ENCODE measurements at regions of chr20 and their contacts with region 1.

Region 1: DNA sequence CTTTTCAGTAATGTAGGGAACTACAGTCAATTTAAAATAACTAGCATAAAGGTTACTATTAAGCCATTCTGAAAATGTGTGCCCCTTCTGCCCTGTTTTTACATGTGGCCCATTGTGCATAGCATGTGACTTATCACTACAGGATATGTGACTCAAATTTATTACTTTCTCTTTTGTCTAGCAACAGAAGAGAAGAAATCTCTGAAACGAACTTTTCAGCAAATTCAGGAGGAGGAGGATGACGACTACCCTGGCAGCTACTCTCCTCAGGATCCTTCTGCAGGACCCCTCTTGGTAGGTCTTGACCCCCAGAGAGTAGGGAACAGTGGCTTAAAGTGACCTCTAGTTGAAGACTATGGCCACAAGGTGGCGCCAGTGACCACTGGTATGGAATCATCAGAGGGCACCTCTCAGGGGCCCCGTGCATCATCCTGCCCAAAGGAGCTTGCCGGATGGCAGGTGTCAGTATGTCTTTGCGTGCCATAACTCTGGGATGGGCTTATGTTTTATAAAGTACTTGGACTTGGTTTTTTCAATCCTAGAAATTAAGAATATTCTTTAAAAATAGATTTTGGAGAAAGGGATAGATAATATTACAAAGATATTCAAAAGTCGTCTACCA is 23.9 kb downstream of the RPRD1B start:
- DNase-seq: peak; percentile 67
- ATAC-seq: peak; percentile 94
- H3K4me3 ChIP-seq: no peak overlapping the region
- H3K27ac ChIP-seq: no peak overlapping the region
- H3K4me1 ChIP-seq: peaks cover 6% of the 10 kb centered on the region
- H3K27me3 ChIP-seq: no peaks in the 10 kb centered on the region
- CTCF ChIP-seq: peak; percentile 80
- POLR2A ChIP-seq: no peak
- RAD21 ChIP-seq: peak; percentile 90

Region 2: GRCh38 chr20:37564388-37565133 is 492.9 kb before region 1 on chr20:
- CTCF ChIA-PET with region 1: no interaction called
- POLR2A ChIA-PET with region 1: no interaction called
- dilution Hi-C with region 1: no loop called
- in situ Hi-C with region 1: loop called (anchors 10 kb)
- intact Hi-C with region 1: loop called (anchors 2 kb)
- DNase-seq: no peak
- ATAC-seq: peak; percentile 96
- H3K4me3 ChIP-seq: no peak overlapping the region
- H3K27ac ChIP-seq: no peak overlapping the region
- H3K4me1 ChIP-seq: no peaks in the 10 kb centered on the region; the same call in 1 of the 2 replicates
- H3K27me3 ChIP-seq: peaks cover 53% of the 10 kb centered on the region
- CTCF ChIP-seq: peak; percentile 95
- POLR2A ChIP-seq: no peak
- RAD21 ChIP-seq: peak; percentile 95

Region 3: DNA sequence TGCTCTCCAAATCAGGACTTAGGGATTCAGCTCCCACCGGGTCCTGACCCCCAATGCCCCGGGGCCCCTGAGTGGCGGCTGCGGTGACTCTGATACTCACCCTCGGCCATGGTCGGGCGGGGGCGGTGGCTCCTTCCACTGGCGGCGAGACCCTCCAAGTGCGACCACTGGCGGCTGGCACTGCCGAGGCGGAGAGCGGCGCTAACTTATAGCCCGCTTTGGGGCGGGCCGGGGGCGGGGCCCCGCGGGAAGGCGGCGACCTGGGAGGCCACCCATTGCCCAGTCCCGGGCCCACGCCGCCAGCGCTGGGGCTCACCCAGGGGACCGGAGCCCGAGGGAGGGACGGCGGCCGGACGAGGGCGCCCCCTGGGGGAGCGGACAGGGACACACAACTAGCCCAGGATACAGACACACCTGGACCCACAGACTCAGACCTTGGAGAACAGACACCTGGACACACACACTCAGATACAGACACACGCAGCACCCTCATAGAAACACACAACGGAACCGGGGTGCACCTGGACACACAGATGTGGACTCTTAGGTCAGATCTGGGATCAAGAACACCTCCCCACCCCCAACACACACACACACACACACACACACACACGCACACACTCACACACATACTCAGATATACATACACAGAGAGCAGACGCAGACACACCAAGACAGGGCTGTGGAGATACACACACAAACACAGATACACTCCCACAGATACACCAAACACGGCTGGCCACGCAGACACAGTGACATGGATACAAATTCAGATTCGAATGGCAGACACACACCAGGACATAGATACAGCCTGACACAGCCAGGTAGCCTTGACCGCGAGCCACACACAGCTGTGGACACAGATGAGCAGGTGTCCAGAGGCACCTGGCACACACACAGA is 107.9 kb after region 1 on chr20 and contains the start of gene TGM2:
- CTCF ChIA-PET with region 1: interaction called, 3 read pairs
- POLR2A ChIA-PET with region 1: no interaction called
- dilution Hi-C with region 1: no loop called
- in situ Hi-C with region 1: no loop called
- intact Hi-C with region 1: loop called (anchors 1 kb)
- DNase-seq: peak; percentile 69
- ATAC-seq: peak; percentile 79
- H3K4me3 ChIP-seq: peak within 1 kb of the TSS; percentile 50
- H3K27ac ChIP-seq: peak within 1 kb of the TSS; percentile 53
- H3K4me1 ChIP-seq: peaks cover 48% of the 10 kb centered on the region
- H3K27me3 ChIP-seq: no peaks in the 10 kb centered on the region
- CTCF ChIP-seq: peak; percentile 81
- POLR2A ChIP-seq: no peak
- RAD21 ChIP-seq: peak; percentile 87
- total RNA-seq, gene TGM2: 237 and 268 TPM in 2 replicates

Region 4: DNA sequence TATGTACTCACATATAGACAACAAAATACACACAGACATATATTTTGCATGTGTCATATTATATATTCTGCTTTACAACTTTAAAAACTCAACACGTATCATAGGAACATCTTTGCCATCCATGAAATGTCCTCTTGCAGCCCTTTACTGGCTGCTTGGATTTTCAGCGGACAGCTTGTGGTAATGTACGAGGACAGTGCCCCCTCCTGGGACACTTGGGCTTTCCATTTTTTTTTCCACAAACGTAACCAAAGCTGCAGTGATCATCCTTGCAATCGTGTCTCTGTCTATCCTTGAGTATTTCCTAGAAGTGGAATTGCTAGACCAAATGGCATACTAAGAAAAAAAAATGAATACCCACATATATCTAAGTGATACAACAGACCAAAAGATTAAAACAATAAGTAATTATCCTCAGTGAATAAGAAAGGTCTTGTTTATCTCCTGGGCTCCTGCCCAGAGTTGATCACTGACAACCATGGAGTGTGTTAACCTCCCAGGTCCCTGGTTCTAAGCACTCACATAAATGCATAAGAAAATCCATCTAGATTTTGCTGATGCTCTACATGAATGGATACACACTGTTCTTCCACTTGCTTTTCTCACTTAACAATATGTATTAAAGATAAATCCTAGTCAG is 264.6 kb after region 1 on chr20:
- CTCF ChIA-PET with region 1: no interaction called
- POLR2A ChIA-PET with region 1: no interaction called
- dilution Hi-C with region 1: no loop called
- in situ Hi-C with region 1: no loop called
- intact Hi-C with region 1: loop called (anchors 2 kb)
- DNase-seq: peak; percentile 73
- ATAC-seq: peak; percentile 84
- H3K4me3 ChIP-seq: no peak overlapping the region
- H3K27ac ChIP-seq: no peak overlapping the region
- H3K4me1 ChIP-seq: no peaks in the 10 kb centered on the region
- H3K27me3 ChIP-seq: peaks cover 38% of the 10 kb centered on the region
- CTCF ChIP-seq: peak; percentile 77
- POLR2A ChIP-seq: no peak
- RAD21 ChIP-seq: peak; percentile 87

Region 5: DNA sequence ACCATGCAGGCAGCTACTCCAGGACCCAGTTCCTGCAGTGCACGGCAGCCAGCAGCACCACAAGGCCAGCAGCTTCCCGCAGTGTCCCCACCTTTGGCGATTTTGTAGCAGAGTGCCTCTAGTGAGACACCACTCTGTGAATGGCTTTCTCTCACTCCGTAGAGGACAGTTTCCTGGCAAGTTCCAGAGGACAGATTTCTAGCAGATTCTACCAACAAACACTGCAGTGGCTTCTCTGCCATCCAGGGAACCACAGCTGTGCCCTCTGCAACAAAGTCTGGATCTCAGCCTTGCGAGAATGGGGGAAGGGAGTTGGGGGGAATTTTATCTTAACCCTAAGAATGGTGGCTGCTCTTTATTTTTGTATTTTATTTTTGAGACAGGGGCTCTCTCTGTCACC is 349.0 kb after region 1 on chr20:
- CTCF ChIA-PET with region 1: interaction called, 3 read pairs
- POLR2A ChIA-PET with region 1: no interaction called
- dilution Hi-C with region 1: no loop called
- in situ Hi-C with region 1: loop called (anchors 10 kb)
- intact Hi-C with region 1: loop called (anchors 5 kb)
- DNase-seq: no peak
- ATAC-seq: no peak
- H3K4me3 ChIP-seq: no peak overlapping the region
- H3K27ac ChIP-seq: no peak overlapping the region
- H3K4me1 ChIP-seq: no peaks in the 10 kb centered on the region
- H3K27me3 ChIP-seq: 0 out of 2 replicates have a peak, but pooled peaks cover 2% of the 10 kb centered on the region
- CTCF ChIP-seq: no peak
- POLR2A ChIP-seq: no peak
- RAD21 ChIP-seq: no peak

Region 6: GRCh38 chr20:38418509-38419204 is 361.2 kb after region 1 on chr20:
- CTCF ChIA-PET with region 1: no interaction called
- POLR2A ChIA-PET with region 1: no interaction called
- dilution Hi-C with region 1: no loop called
- in situ Hi-C with region 1: loop called (anchors 10 kb)
- intact Hi-C with region 1: no loop called
- DNase-seq: peak; percentile 40
- ATAC-seq: peak; percentile 74
- H3K4me3 ChIP-seq: no peak overlapping the region
- H3K27ac ChIP-seq: no peak overlapping the region
- H3K4me1 ChIP-seq: no peaks in the 10 kb centered on the region; the same call in 1 of the 2 replicates
- H3K27me3 ChIP-seq: no peaks in the 10 kb centered on the region
- CTCF ChIP-seq: no peak
- POLR2A ChIP-seq: no peak
- RAD21 ChIP-seq: no peak

Region 7: GRCh38 chr20:39532205-39532604 is 1474.7 kb after region 1 on chr20:
- CTCF ChIA-PET with region 1: no interaction called
- POLR2A ChIA-PET with region 1: no interaction called
- dilution Hi-C with region 1: no loop called
- in situ Hi-C with region 1: no loop called
- intact Hi-C with region 1: no loop called
- DNase-seq: no peak
- ATAC-seq: no peak
- H3K4me3 ChIP-seq: no peak overlapping the region
- H3K27ac ChIP-seq: no peak overlapping the region
- H3K4me1 ChIP-seq: no peaks in the 10 kb centered on the region
- H3K27me3 ChIP-seq: no peaks in the 10 kb centered on the region
- CTCF ChIP-seq: no peak
- POLR2A ChIP-seq: no peak
- RAD21 ChIP-seq: no peak

Measured in IMR-90 (cell line).